ENCODE measurements at regions of chr6 and their contacts with region 1.

Region 1: DNA sequence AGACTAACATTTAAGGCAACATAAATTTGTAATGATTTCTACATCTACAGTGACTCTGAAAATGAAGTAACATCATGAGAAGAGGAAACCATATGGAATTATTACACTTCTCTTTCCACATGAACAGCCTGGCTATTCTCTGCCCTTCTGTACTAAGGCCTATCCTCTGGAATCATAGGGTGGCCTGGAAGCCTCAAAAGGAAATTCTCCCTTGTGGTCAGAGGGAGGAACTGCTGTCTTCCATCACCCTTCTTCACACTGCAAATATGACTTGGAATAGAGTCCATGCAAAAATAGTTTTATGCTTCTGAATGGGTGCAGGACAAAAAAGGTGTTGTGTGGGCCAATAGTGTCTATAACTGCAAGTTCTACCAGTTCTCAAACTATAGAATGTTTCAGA is 44.6 kb upstream of the SH3BGRL2 start:
- DNase-seq: no peak
- CTCF ChIP-seq: no peak

Region 2: DNA sequence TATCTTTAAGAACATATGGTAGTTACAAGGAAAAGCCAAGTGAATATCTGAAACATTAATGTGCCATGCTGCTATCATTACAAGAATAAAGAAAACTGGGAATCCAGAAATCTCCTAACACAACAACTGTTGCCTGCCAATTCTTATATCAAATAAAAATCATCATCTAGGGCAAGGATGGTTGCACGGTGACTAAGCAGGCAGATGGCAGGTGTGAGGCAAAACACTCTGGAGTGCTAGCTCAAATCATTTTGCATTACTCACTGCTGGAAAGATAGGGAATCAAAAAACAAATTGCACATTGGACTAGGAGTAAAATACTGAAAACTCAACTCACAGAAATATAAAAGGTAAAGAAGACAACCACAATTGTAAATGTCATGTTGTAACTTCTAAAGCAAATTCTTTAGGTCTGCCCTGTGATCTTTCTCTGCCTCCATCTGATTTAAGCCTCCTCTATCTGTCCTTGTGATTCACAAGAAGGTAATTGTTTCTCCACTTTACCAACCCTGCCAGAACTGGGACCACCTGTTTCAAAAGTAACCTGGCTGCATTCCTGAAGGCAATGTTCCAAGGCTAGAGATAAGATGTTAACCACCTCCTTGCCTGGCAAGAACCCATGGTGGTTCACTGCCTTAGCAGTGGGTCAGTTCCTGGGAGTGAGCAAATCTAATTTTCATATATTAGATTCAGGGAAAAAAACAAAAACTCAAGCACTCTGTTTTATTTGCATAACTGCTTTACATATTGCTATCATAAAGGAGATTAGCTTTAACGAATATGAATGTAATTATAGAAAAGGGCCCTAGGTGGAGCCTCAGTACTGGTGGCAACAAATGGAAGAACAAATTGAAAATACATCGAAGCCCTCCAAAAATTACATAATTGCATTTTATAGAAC is 16.2 kb before region 1 on chr6:
- CTCF ChIA-PET with region 1: interaction called, 12 read pairs
- POLR2A ChIA-PET with region 1: no interaction called
- DNase-seq: peak; percentile 33
- CTCF ChIP-seq: peak; percentile 50